BJ (cell line): ENCODE measurements at regions of chr17 and their contacts with region 1.

Region 1: DNA sequence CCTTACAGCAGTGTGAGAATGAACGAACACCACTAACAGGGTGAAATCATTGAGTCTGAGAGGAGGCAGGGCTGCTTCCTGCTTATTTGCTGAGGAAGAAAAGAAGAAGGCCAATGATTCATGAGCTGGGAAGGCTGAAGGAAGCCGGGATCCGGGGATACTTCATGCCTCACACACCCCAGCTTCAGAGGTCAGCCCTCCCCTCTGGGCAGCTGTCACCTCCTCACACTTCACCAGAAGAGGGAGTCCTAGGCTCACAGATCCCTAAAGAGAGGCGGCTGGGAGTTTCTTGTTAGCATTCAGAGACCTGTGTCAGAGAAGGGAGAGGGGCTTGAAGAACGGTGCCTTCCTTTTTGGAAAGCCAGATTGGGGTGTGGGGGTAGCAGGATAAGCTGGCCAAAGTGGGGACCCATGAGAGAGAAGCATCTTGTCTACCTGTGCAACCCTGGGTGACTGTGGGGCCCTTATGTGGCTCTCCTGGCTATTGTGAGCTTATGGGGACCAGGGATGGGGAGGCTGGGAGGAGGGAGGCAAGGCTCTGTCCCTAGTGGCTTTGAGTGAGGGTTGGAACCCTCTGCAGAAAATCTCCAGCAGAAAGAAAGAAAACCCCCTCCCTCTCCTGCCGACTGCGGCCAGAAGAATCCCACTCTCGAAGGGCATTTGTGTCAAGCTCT is 94.6 kb downstream of the RGS9 start:
- DNase-seq: peak; percentile 71
- H3K4me3 ChIP-seq: no peak overlapping the region
- H3K27me3 ChIP-seq: peaks cover 3% of the 10 kb centered on the region; the same call in 1 of the 2 replicates
- CTCF ChIP-seq: peak; percentile 85

Region 2: DNA sequence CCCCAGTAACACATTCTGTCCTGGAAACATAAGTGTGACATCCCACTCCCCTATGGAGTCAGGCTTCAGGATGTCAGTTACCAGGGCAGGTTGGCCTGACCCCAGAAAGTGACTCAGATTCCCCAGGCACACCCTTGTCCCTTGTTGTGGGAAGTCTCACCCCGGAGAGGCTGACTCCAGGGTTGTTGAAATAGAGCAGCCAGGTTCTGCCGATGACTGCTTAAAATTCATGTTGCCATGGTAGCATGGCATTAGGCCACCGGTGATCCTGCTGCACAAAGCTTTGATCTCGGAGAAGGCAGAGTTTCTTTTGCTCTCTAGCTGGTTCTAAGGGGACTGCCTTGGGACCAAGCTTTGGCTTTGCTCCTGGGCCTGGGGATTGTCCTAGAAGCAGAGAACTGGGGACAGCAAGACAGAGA is 12.0 kb after region 1 on chr17:
- CTCF ChIA-PET with region 1: interaction called, 20 read pairs
- POLR2A ChIA-PET with region 1: no interaction called
- DNase-seq: no peak
- H3K4me3 ChIP-seq: no peak overlapping the region
- H3K27me3 ChIP-seq: peaks cover 8% of the 10 kb centered on the region
- CTCF ChIP-seq: no peak

Region 3: DNA sequence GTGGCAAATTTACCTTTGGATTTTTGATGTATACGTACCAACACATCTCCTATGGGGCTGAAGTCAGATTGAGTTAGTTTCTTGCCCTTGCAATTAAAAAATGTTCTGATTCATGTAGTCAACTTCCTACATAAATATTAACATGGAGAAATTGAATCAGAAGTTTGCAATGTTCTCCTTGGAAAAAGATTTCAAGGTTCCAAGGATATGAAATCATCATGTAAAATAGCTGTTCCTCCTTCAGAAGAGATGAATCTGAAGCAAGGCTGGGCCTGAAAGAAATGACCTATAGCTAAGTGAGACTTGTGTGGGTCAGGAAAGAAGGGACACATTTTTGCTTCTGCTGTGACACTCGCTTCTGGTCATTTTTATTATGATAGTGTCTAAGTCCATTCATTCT is 37.0 kb after region 1 on chr17:
- CTCF ChIA-PET with region 1: interaction called, 11 read pairs
- POLR2A ChIA-PET with region 1: no interaction called
- DNase-seq: no peak
- H3K4me3 ChIP-seq: no peak overlapping the region
- H3K27me3 ChIP-seq: no peaks in the 10 kb centered on the region
- CTCF ChIP-seq: no peak

Region 4: DNA sequence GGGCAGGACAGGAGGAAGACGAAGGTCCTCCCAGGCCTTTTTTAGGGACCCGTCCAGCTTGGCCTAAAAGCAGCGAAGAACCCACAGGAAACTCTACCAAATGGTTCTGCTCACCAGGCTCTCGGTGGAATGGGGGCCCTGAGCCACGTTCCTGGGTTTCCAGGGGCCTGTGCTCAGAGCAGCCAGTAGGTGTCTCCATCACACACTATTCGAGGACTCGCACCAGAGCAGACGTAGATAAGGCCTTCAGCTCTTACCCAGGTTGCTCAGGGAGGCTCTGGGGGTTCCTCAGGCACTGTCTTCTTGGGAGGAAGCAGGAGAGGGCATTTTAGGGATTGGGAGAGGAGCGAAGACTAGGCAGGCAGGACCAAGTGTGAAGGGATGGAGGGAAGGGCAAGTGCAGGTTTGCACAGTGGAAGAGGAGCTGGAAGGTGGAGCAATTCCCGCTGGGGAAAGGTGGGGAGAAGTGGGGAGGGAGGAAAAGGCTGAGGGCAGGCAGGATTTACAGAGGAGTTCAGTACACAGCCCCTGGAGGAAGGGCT is 62.5 kb after region 1 on chr17:
- CTCF ChIA-PET with region 1: interaction called, 23 read pairs
- POLR2A ChIA-PET with region 1: no interaction called
- DNase-seq: no peak
- H3K4me3 ChIP-seq: no peak overlapping the region
- H3K27me3 ChIP-seq: peaks cover 9% of the 10 kb centered on the region
- CTCF ChIP-seq: peak; percentile 90

Region 5: DNA sequence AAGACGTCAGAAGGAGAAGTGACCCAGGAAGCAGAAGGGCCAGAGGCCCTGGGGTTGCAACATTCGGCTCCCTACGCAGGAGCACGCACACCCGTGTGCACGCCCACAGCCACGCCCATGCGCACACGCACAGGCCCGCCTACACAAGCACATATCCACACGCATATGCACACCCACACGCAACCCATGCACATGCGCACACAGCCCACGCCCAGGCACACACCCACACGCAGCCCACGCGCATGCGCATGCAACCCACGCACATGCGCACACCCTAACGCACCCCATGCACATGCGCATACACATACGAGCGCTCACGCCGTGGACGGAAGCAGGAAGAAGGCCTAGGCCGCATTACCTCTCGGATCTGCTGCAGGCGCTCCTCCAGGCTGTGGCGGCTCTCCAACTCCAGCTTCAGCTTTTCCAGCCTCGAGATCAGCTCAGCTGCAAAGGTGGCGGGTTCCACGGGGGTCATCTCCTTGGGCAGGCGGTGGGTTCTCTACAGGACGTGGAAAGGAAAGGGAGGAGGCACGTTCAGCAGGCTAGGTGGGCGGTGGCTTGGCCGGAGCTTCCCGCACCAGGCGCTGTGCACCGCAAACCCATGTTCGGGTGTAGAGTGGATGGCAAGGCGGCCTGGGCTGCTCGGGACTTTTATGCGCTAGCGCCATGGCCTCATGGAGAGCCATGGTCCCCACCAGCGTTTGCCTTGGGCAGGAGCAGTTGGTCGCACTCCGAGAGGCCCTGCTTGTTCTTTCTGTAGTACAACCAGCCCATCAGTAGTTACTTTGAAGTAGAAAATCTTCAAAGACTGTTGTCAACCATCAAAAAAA is 306.3 kb after region 1 on chr17:
- CTCF ChIA-PET with region 1: interaction called, 11 read pairs
- POLR2A ChIA-PET with region 1: no interaction called
- DNase-seq: no peak
- H3K4me3 ChIP-seq: no peak overlapping the region
- H3K27me3 ChIP-seq: no peaks in the 10 kb centered on the region
- CTCF ChIP-seq: no peak

Region 6: DNA sequence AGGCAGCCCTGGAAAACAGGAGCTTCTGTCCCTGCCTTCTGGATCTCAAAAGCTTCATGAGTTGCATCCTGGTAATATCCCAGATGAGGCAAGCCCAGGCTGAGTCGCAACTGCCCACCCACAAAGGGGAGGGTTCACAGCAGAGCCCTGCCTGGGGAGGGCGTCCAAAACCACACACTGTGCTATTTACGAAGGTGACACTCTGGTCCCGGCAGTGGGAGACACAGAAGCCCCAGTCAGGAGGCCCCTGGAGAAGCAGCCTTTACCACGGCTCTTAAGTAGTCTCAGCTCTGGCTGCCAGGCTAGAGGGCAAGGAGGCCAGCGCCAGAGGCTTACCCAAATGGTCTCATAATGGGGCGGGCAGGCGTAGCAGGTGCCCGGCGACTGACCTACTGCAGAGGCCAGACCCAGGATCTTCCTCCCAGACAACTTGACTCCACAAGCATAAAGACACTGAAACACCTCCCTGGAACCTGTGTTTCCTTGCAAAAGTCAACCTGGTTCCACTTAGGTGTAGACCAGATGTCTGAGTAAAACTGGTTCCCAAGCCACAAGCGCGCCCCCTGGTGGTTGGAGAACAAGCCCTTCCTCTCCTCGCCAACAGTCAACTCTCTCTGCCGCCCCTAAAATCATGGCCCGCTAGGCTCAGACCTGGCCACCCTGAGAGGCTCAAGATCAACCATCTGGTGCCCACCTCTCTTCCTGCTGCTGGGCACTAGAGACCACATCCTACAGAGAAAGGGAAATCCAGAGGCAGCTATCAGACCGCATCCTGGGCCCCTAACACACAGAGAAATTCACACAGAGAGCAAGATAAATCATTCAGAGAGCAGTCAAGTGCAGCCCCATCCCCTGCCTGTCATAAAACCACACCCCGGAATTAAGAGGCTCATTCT is 324.5 kb after region 1 on chr17:
- CTCF ChIA-PET with region 1: interaction called, 11 read pairs
- POLR2A ChIA-PET with region 1: no interaction called
- DNase-seq: no peak
- H3K4me3 ChIP-seq: no peak overlapping the region
- H3K27me3 ChIP-seq: peaks cover 11% of the 10 kb centered on the region
- CTCF ChIP-seq: peak; percentile 88

Region 7: GRCh38 chr17:66165513-66166123 is 933.8 kb after region 1 on chr17:
- CTCF ChIA-PET with region 1: interaction called, 47 read pairs
- POLR2A ChIA-PET with region 1: no interaction called
- DNase-seq: peak; percentile 10
- H3K4me3 ChIP-seq: no peak overlapping the region
- H3K27me3 ChIP-seq: no peaks in the 10 kb centered on the region
- CTCF ChIP-seq: peak; percentile 62